WTC11 (cell line): ENCODE measurements at regions of chr12 and their contacts with region 1.

Region 1: DNA sequence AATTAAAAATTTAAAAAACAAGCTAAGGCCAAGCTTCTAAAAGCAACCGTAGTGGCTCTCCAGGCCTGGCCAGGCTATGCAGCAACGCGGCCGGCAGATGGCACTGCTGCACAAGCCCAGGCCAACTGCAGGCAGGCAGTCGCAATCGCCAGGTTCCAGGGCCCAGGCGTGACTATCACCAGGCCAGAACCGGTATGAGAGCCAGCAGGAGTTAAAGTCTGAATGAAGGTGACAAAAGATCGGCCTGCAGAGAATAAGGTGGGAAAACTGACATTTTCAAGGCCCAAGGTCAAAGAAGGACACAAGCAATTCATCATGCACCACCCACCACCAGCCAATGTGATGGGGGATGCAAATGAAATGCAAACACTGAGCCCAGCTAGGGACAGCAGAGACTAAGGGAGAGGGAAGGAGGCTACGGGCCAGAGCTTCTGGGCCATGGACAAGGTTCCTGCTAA is 43.6 kb upstream of the ANO2 start:
- DNase-seq: peak; percentile 92
- ATAC-seq: peak; percentile 97
- H3K4me3 Mint-ChIP-seq: no peak overlapping the region
- H3K27ac Mint-ChIP-seq: peak overlapping the region; percentile 95; the same call in 1 of the 2 replicates
- H3K4me1 Mint-ChIP-seq: peaks cover 30% of the 10 kb centered on the region
- H3K27me3 Mint-ChIP-seq: no peaks in the 10 kb centered on the region; the same call in 1 of the 2 replicates
- CTCF ChIP-seq: peak; percentile 83

Region 2: DNA sequence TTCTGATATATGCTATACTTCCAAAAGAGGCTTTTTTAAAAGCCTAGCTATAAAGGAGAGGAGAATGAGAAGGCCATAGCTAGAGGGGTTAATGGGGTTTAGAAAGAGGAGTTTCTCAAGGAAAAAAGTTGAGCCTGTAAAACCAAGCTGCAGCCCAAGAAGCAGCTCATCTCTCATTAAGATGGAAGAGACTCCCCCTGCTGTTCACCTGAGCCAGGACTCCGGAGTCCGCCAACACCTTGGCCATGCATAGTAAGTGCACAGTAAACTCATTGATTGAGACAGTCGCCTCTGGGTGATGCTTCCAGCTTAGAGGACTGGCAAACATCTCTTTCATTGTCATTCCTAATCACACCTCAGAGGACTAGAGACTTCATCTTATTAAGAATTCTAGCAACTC is 89.8 kb before region 1 on chr12:
- CTCF ChIA-PET with region 1: interaction called, 10 read pairs
- POLR2A ChIA-PET with region 1: no interaction called
- DNase-seq: peak; percentile 47
- ATAC-seq: peak; percentile 80
- H3K4me3 Mint-ChIP-seq: no peak overlapping the region
- H3K27ac Mint-ChIP-seq: no peak overlapping the region
- H3K4me1 Mint-ChIP-seq: peaks cover 12% of the 10 kb centered on the region
- H3K27me3 Mint-ChIP-seq: peaks cover 2% of the 10 kb centered on the region; the same call in 1 of the 2 replicates
- CTCF ChIP-seq: no peak

Region 3: GRCh38 chr12:5923751-5924150 is 64.9 kb before region 1 on chr12:
- CTCF ChIA-PET with region 1: interaction called, 12 read pairs
- POLR2A ChIA-PET with region 1: no interaction called
- DNase-seq: no peak
- ATAC-seq: no peak
- H3K4me3 Mint-ChIP-seq: no peak overlapping the region
- H3K27ac Mint-ChIP-seq: peak overlapping the region; percentile 26; the same call in 1 of the 2 replicates
- H3K4me1 Mint-ChIP-seq: peaks cover 13% of the 10 kb centered on the region
- H3K27me3 Mint-ChIP-seq: no peaks in the 10 kb centered on the region
- CTCF ChIP-seq: no peak

Region 4: GRCh38 chr12:5965950-5966383 is 22.7 kb before region 1 on chr12:
- CTCF ChIA-PET with region 1: interaction called, 46 read pairs
- POLR2A ChIA-PET with region 1: interaction called, 3 read pairs
- DNase-seq: peak; percentile 74
- ATAC-seq: peak; percentile 79
- H3K4me3 Mint-ChIP-seq: no peak overlapping the region
- H3K27ac Mint-ChIP-seq: no peak overlapping the region
- H3K4me1 Mint-ChIP-seq: peaks cover 38% of the 10 kb centered on the region
- H3K27me3 Mint-ChIP-seq: peaks cover 5% of the 10 kb centered on the region; the same call in 1 of the 2 replicates
- CTCF ChIP-seq: peak; percentile 55

Region 5: GRCh38 chr12:6033546-6033945 is 44.9 kb after region 1 on chr12:
- CTCF ChIA-PET with region 1: interaction called, 566 read pairs
- POLR2A ChIA-PET with region 1: interaction called, 6 read pairs
- DNase-seq: no peak
- ATAC-seq: no peak
- H3K4me3 Mint-ChIP-seq: no peak overlapping the region
- H3K27ac Mint-ChIP-seq: no peak overlapping the region
- H3K4me1 Mint-ChIP-seq: peaks cover 4% of the 10 kb centered on the region
- H3K27me3 Mint-ChIP-seq: peaks cover 1% of the 10 kb centered on the region
- CTCF ChIP-seq: no peak

Region 6: DNA sequence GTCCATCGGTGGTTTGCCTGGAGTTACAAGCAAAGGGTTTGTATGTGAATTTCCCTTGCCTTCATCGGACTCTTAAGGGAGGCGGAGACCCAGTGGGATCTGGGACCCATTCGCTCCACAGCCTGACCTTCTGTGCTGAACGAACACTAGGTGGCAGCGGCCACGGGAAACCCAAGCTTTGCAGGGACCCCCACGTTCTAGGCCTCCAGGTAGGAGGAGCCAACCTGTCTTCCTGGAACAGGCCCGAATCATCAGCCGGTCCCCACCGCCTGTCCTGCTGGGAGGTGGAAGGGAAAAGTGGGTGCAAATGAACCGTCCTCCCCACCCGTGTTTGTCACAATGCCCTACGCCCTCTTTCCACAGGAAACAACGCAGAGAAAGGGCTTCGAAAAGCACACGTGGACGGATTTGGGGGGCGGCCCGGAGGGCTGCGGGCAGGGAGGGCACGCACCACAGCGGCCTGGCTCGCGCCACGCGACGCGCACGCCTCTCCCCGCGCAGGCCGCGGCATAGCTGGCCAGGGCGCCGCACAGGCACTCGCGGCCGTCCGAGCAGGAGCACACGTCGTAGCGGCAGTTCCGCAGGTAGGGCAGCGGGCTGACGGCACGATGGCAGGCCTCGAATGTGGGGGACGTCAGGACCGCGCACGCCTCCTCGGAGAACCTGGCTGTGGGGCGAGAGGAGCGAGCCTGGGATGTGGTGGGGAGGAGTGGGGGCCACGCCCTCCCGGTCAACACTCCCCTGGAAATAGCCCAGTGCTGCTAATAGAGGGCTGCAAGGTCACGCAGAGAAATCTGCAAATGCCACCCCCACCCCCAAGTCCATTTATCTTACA is 67.9 kb after region 1 on chr12:
- CTCF ChIA-PET with region 1: interaction called, 31 read pairs
- POLR2A ChIA-PET with region 1: interaction called, 3 read pairs
- DNase-seq: peak; percentile 70
- ATAC-seq: peak; percentile 79
- H3K4me3 Mint-ChIP-seq: peak overlapping the region; percentile 59
- H3K27ac Mint-ChIP-seq: no peak overlapping the region
- H3K4me1 Mint-ChIP-seq: peaks cover 29% of the 10 kb centered on the region
- H3K27me3 Mint-ChIP-seq: peaks cover 6% of the 10 kb centered on the region
- CTCF ChIP-seq: no peak

Region 7: DNA sequence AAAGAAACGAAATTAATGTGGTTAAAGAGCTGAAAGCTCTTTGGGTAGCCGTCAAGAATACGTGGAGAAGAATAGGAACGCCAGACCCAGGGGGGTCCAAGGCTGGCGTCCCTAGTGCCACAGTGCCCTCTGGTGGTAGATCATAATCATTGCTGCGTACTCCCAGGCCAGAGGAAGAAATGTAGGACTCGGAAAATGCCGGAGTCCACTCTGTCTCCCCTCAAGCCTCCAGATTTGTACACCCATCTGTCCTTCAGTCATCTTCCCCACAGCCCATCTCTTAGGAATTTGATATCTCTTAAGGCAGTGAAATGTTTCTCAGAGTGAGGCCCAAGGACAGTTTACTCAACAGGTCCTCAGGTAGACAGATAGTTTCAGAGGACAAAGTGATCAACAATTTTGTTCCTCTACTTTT is 296.4 kb after region 1 on chr12:
- CTCF ChIA-PET with region 1: interaction called, 29 read pairs
- POLR2A ChIA-PET with region 1: no interaction called
- DNase-seq: peak; percentile 73
- ATAC-seq: peak; percentile 88
- H3K4me3 Mint-ChIP-seq: no peak overlapping the region
- H3K27ac Mint-ChIP-seq: no peak overlapping the region
- H3K4me1 Mint-ChIP-seq: peaks cover 20% of the 10 kb centered on the region
- H3K27me3 Mint-ChIP-seq: peaks cover 5% of the 10 kb centered on the region
- CTCF ChIP-seq: peak; percentile 95